A673 (cell line): ENCODE measurements at regions of chr14 and their contacts with region 1.

Region 1: DNA sequence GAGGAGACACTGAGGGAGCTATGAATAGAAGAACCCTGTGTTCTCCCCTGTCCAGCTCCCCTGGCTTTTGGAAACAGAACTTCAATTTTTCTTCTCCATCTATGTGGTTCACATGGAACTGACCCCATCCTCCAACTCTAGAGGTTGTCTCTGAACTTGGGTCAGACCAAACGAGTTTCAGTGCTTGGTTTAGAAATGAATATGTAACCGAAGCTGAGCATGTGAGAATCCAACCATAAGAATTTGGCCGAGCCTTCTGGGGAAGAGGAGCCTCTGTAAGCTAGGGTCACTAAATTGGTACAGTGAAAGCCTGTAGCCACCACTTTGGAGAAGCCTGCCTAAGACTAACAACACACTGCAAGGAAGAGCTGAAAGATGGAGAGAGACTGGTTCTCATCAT is 464.4 kb downstream of the ZFP36L1 start:
- DNase-seq: no peak
- H3K4me3 ChIP-seq: no peak overlapping the region
- H3K27ac ChIP-seq: no peak overlapping the region
- H3K4me1 ChIP-seq: no peaks in the 10 kb centered on the region
- H3K27me3 ChIP-seq: no peaks in the 10 kb centered on the region
- CTCF ChIP-seq: no peak

Region 2: GRCh38 chr14:68124979-68125731 is 203.4 kb before region 1 on chr14:
- CTCF ChIA-PET with region 1: no interaction called
- POLR2A ChIA-PET with region 1: no interaction called
- intact Hi-C with region 1: no loop called
- DNase-seq: no peak
- H3K4me3 ChIP-seq: no peak overlapping the region
- H3K27ac ChIP-seq: no peak overlapping the region
- H3K4me1 ChIP-seq: no peaks in the 10 kb centered on the region
- H3K27me3 ChIP-seq: no peaks in the 10 kb centered on the region
- CTCF ChIP-seq: no peak

Region 3: GRCh38 chr14:68312884-68313610 is 15.5 kb before region 1 on chr14:
- CTCF ChIA-PET with region 1: no interaction called
- POLR2A ChIA-PET with region 1: no interaction called
- intact Hi-C with region 1: no loop called
- DNase-seq: no peak
- H3K4me3 ChIP-seq: no peak overlapping the region
- H3K27ac ChIP-seq: no peak overlapping the region
- H3K4me1 ChIP-seq: peaks cover under 1% of the 10 kb centered on the region
- H3K27me3 ChIP-seq: no peaks in the 10 kb centered on the region
- CTCF ChIP-seq: no peak

Region 4: GRCh38 chr14:68444449-68445168 is 116.1 kb after region 1 on chr14:
- CTCF ChIA-PET with region 1: no interaction called
- POLR2A ChIA-PET with region 1: interaction called, 14 read pairs
- intact Hi-C with region 1: no loop called
- DNase-seq: peak; percentile 42
- H3K4me3 ChIP-seq: no peak overlapping the region
- H3K27ac ChIP-seq: no peak overlapping the region
- H3K4me1 ChIP-seq: peaks cover 6% of the 10 kb centered on the region
- H3K27me3 ChIP-seq: no peaks in the 10 kb centered on the region
- CTCF ChIP-seq: no peak